AG04450 (cell line): ENCODE measurements at regions of chr5 and their contacts with region 1.

Region 1: DNA sequence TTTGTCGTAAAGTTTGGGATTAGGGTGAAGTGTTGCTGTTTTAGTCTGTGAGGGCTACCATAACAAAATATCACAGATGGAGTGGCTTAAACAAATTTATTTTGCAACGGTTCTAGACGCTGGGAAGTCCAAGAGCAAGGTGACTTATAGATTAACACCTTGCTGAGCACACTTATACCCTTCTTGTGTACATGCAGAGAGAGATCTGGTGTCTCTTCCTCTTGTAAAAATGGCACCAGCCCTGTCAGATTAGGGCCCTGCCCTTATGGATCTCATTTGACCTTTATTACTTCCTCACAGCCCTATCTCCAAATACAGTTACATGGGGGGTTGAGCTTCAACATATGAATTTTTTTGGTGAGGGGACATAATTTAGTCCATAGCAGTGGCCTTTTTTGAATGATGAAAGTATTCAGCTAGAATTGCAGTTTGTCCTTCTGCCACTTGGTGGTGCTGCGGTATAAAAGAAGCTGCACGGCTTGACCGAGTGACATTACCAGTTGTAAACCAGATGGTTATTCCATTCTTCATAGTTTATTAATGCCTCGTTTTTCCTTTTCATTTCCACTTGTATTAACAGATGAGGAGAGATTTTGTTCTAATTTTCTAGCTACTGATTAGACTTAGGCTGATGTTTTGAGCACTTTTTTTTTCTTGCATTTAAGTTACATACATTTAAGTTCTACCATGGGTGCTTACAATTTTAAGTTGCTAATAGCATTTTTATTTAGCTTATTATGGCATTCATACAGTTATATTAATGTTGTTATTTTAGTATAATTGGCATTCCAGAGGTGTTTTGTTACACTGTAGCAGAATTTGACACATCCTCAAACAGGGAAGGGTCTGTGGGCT is 19.4 kb downstream of the DCP2 start:
- DNase-seq: peak; percentile 50
- H3K4me3 ChIP-seq: no peak overlapping the region
- H3K27ac ChIP-seq: no peak overlapping the region
- H3K27me3 ChIP-seq: no peaks in the 10 kb centered on the region
- CTCF ChIP-seq: peak; percentile 89

Region 2: GRCh38 chr5:111580956-111581355 is 1415.0 kb before region 1 on chr5:
- CTCF ChIA-PET with region 1: no interaction called
- POLR2A ChIA-PET with region 1: no interaction called
- DNase-seq: no peak
- H3K4me3 ChIP-seq: no peak overlapping the region
- H3K27ac ChIP-seq: no peak overlapping the region
- H3K27me3 ChIP-seq: no peaks in the 10 kb centered on the region
- CTCF ChIP-seq: no peak

Region 3: GRCh38 chr5:112860929-112861637 is 134.9 kb before region 1 on chr5 and contains the start of gene SRP19:
- CTCF ChIA-PET with region 1: no interaction called
- POLR2A ChIA-PET with region 1: no interaction called
- DNase-seq: peak; percentile 96
- H3K4me3 ChIP-seq: peak within 1 kb of the TSS; percentile 97
- H3K27ac ChIP-seq: peak within 1 kb of the TSS; percentile 84
- H3K27me3 ChIP-seq: no peaks in the 10 kb centered on the region
- CTCF ChIP-seq: no peak
- polyA plus RNA-seq, gene SRP19: 98.6 and 149 TPM in 2 replicates

Region 4: DNA sequence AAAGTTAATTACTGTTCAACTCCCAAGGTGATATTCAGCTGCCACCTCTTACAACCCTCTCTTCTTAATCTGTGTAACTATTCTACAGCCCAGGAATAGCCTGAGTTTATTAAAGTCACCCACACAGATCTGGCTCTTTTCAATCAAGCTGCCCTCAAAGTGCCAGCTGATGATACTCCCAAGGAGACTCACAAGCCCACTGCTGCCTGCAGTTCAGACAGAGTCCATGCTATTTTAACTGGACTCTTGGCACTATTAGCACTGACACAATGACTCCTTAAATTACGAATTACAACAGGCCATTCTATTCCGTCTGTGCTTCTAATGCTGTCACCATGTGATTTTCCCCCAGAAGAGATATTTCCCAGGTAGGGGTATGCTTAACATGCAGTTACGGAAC is 100.3 kb before region 1 on chr5:
- CTCF ChIA-PET with region 1: no interaction called
- POLR2A ChIA-PET with region 1: no interaction called
- DNase-seq: no peak
- H3K4me3 ChIP-seq: no peak overlapping the region
- H3K27ac ChIP-seq: no peak overlapping the region
- H3K27me3 ChIP-seq: no peaks in the 10 kb centered on the region
- CTCF ChIP-seq: no peak

Region 5: GRCh38 chr5:112983363-112983762 is 12.6 kb before region 1 on chr5:
- CTCF ChIA-PET with region 1: interaction called, 71 read pairs
- POLR2A ChIA-PET with region 1: no interaction called
- DNase-seq: no peak
- H3K4me3 ChIP-seq: no peak overlapping the region
- H3K27ac ChIP-seq: no peak overlapping the region
- H3K27me3 ChIP-seq: no peaks in the 10 kb centered on the region
- CTCF ChIP-seq: no peak

Region 6: DNA sequence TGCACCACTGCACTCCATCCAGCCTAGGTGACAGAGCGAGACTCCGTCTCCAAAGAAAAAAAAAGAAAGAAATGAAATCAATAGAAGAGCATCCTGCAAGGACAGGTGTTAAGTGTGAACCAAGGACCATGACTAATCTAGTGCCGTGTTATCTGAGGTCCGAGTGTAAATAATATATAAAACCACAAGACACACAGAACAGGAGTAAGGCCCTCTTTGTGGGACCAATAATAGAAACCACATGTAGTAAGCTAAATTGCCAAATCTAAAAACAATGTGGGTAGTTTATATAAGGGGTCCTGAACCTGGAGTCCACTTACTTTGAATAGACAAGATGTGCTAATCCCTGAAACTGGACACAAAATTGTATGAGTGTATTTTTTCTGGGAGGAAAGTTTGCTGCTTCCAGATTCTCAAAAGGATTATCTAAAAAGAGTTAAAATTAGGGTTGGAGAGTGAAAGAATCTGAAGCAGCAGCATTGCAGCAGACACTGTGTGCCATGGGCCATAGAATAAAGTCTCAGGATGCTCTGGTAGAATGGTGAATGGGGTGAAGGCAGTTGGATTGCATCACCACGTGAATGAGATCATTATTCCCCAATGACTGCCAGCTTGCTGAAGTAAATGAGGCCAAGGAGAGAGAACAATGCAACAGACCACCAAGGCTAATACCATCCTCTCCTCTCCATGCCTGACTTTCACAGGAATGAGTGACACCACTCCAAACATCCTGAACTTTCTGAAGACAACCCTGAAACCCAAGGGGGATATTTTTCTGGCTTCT is 203.3 kb after region 1 on chr5:
- CTCF ChIA-PET with region 1: interaction called, 5 read pairs
- POLR2A ChIA-PET with region 1: interaction called, 11 read pairs
- DNase-seq: peak; percentile 58
- H3K4me3 ChIP-seq: no peak overlapping the region
- H3K27ac ChIP-seq: peak overlapping the region; percentile 43
- H3K27me3 ChIP-seq: no peaks in the 10 kb centered on the region
- CTCF ChIP-seq: no peak

Region 7: GRCh38 chr5:113311301-113311700 is 315.3 kb after region 1 on chr5:
- CTCF ChIA-PET with region 1: interaction called, 12 read pairs
- POLR2A ChIA-PET with region 1: no interaction called
- DNase-seq: no peak
- H3K4me3 ChIP-seq: no peak overlapping the region
- H3K27ac ChIP-seq: no peak overlapping the region
- H3K27me3 ChIP-seq: no peaks in the 10 kb centered on the region
- CTCF ChIP-seq: no peak

Region 8: GRCh38 chr5:113378959-113379541 is 383.1 kb after region 1 on chr5:
- CTCF ChIA-PET with region 1: interaction called, 28 read pairs
- POLR2A ChIA-PET with region 1: no interaction called
- DNase-seq: peak; percentile 20
- H3K4me3 ChIP-seq: no peak overlapping the region
- H3K27ac ChIP-seq: no peak overlapping the region
- H3K27me3 ChIP-seq: peaks cover 3% of the 10 kb centered on the region
- CTCF ChIP-seq: peak; percentile 74

Region 9: DNA sequence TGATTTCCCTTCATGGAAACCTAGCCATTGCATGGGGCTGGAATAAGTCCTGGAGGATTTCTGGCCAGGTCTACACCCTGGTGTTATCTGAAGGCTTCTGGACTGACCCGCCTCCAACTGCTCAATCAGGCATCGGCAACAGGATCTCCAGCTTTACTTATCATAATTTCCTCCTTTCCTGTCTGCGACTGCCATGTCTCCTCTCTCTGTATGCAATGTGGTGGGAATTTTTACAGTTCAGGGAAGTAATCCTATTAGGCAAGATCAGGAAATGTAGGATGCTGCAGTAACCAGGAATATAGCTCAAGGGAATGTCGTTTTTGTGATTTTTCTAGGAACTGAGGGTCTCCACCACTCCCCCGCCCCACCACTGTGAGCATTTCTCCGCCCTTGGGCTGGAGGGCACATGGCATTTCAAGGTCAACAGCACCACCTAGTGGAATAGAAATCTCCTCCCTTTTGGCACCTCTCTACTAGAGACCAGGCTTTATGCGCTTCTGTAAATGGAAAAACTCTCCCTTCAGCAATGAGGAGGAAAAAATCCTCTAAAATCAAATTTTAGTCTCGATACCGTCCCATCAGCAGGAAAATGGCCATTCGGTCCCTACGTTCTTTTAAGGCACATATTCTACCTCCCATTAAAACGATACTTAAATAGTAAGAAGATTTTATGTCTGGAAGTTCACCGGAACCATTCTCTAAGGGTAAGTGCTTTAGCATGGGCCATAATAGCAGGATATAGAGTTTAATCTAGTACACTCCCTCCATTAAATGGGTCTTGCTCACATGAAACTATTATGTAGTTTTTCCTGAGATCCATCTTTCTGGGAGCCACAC is 610.5 kb after region 1 on chr5:
- CTCF ChIA-PET with region 1: interaction called, 37 read pairs
- POLR2A ChIA-PET with region 1: no interaction called
- DNase-seq: peak; percentile 18
- H3K4me3 ChIP-seq: no peak overlapping the region
- H3K27ac ChIP-seq: no peak overlapping the region
- H3K27me3 ChIP-seq: no peaks in the 10 kb centered on the region
- CTCF ChIP-seq: peak; percentile 82